Dorsolateral prefrontal cortex (tissue), 120 donors: ENCODE measurements at regions of chr1 and their contacts with region 1.

Region 1: GRCh38 chr1:109984456-109985275 is at the start of gene AHCYL1:
- DNase-seq: peak; percentile 99 to 100 (median 100)
- H3K4me3 ChIP-seq: peak within 1 kb of the TSS; percentile 67 to 98 (median 91)
- H3K27ac ChIP-seq: peak within 1 kb of the TSS; percentile 68 to 99 (median 96)
- H3K27me3 ChIP-seq: no peaks in the 10 kb centered on the region
- CTCF ChIP-seq: peak; percentile 95 to 100 (median 99)
- total RNA-seq, gene AHCYL1: 172 to 665 (median 292) TPM

Region 2: GRCh38 chr1:109548321-109549267 is 436.1 kb before region 1 on chr1 and contains the start of gene GNAI3:
- intact Hi-C with region 1: loop called (anchors 1 to 2 kb)
- DNase-seq: peak; percentile 96 to 99 (median 98)
- H3K4me3 ChIP-seq: peak within 1 kb of the TSS; percentile 70 to 99 (median 93)
- H3K27ac ChIP-seq: peak within 1 kb of the TSS; percentile 46 to 98 (median 90)
- H3K27me3 ChIP-seq: no peaks in the 10 kb centered on the region
- CTCF ChIP-seq: peak in 33 of 56 donors; percentile 7 to 65 (median 30)
- total RNA-seq, gene GNAI3: 3.6 to 7.2 (median 5.2) TPM

Region 3: GRCh38 chr1:109762821-109763645 is 221.6 kb before region 1 on chr1:
- intact Hi-C with region 1: no loop called
- DNase-seq: peak in 6 of 10 donors; percentile 5 to 32 (median 17)
- H3K4me3 ChIP-seq: no peak overlapping the region
- H3K27ac ChIP-seq: no peak overlapping the region
- H3K27me3 ChIP-seq: no peaks in the 10 kb centered on the region
- CTCF ChIP-seq: no peak

Region 4: DNA sequence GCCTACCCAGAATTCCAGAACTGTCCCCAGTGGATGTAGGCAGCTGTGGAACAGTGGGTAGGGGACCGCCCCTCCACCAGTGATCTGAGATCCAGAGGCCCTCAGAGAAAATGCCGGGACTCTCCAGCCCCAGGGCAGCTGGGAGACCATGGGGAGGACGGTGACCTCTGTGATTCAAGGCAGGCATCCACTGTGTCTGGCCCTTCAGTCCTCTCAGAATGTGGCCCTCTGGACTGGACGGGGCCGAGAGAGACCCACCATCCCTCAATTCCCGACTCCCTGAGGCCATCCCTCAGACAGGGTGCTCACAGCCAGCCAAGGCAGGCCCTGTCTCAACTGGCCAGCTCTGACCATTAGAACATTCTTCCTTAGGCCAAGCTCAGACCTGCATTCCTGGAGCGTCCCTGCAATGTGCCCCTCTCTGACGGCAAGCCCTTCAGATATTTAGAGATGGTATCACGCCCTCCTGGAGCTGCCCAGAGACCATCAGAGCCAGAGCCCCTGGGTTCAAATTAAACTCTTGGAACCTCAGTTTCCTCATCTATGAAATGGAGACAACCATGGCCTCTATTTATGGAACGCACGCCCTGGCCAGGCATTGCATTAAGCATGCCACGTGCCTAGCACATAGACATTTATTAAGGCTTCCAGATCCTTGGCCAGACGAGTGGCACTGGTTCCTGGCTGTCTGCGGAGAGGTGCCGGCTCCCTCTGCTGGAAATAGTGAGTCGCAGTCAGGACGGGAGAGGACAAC is 211.3 kb before region 1 on chr1:
- intact Hi-C with region 1: loop called (anchors 1 kb)
- DNase-seq: peak; percentile 58 to 88 (median 84)
- H3K4me3 ChIP-seq: no peak overlapping the region
- H3K27ac ChIP-seq: peak overlapping the region in 3 of 59 donors; percentile 18 to 49 (median 36)
- H3K27me3 ChIP-seq: no peaks in the 10 kb centered on the region
- CTCF ChIP-seq: peak; percentile 44 to 90 (median 83)

Region 5: DNA sequence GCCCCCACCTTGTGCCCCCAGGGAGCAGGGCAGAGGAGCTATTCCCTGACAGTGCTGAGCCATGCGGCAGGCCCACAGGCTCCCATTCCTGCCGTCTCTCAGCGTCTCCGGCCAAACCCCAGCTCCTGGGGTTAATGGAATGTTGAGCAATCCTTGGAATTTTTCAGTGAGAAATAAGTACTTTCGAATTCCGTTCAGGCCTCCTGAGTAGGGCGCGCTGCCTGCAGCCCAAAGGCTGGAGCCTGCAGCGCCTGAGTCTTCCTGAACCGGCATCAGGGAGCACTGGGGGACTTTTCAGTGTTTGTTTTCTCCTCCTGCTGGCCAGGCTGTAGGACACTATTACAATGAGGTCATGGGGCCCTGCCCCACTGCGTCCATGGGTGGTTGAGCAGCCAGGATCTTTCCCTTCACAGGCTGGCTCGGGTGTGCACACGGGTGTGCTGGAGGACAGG is 107.3 kb before region 1 on chr1:
- intact Hi-C with region 1: loop called (anchors 5 to 10 kb)
- DNase-seq: peak in 6 of 10 donors; percentile 40 to 73 (median 58)
- H3K4me3 ChIP-seq: peak overlapping the region in 22 of 59 donors; percentile 2 to 52 (median 17)
- H3K27ac ChIP-seq: peak overlapping the region; percentile 64 to 99 (median 89)
- H3K27me3 ChIP-seq: no peaks in the 10 kb centered on the region
- CTCF ChIP-seq: peak in 43 of 56 donors; percentile 7 to 61 (median 38)

Region 6: DNA sequence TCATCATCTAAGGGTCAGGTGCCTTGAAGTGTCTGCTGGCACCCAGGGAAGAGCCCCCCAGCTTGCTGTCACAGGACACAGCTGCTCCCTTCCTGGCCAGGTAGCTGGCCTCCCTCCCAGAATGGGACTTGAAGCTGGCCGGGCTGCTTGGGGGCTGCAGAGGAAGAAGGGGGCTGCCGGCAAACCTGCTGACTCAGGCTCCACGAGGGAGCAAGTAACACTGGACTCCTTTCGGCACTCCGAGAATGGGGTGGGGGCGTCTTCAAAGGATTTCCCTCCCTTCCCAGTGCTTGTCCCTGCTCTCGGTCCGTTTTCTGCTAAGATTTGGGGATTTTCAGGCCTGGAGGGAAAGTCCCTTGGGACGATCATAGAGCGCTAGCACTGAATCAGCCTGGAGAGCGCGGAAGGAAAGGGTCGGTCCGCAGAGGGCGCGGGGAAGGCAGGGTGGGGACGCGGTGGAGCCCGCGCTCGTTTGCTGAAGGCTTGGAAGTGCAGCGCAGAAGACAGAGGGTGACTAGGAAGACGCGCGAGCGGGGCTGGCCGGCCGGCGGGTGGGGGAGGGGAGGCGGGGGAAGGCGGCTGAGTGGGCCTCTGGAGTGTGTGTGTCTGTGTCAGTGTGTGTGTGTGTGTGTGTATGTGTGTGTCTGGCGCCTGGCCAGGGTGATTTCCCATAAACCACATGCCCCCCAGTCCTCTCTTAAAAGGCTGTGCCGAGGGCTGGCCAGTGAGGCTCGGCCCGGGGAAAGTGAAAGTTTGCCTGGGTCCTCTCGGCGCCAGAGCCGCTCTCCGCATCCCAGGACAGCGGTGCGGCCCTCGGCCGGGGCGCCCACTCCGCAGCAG is 74.3 kb before region 1 on chr1 and contains the start of gene CSF1:
- intact Hi-C with region 1: loop called (anchors 2 to 5 kb)
- DNase-seq: peak; percentile 38 to 86 (median 82)
- H3K4me3 ChIP-seq: peak within 1 kb of the TSS; percentile 53 to 91 (median 80)
- H3K27ac ChIP-seq: peak within 1 kb of the TSS in 57 of 59 donors; percentile 11 to 95 (median 86)
- H3K27me3 ChIP-seq: peaks cover 0 to 4% (median 0%) of the 10 kb centered on the region in 45 donors
- CTCF ChIP-seq: peak in 9 of 56 donors; percentile 5 to 34 (median 12)
- total RNA-seq, gene CSF1: 8.9 to 51.5 (median 20.8) TPM

Region 7: DNA sequence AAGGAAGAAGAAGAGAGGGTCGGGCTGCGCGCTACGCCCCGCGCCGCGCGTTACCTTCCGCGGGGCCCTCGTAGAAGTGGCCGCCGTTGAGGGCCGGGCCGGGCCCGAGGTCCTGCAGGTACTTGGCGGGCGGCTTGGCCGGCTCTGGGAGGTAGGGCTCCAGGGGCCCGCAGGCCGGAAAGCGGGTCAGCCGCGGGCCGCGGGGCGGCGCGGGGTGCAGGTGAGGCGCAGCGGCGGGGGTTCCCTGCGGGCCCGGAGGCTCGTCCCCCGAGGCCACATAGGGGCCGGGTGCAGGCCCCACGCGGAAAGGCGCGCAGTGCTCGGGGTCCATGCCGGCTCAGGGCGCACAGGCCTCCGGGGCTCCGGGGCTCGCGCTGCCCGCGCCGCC is 85.6 kb after region 1 on chr1:
- intact Hi-C with region 1: no loop called
- DNase-seq: no peak
- H3K4me3 ChIP-seq: peak overlapping the region in 45 of 59 donors; percentile 4 to 58 (median 33)
- H3K27ac ChIP-seq: peak overlapping the region in 23 of 59 donors; percentile 4 to 80 (median 59)
- H3K27me3 ChIP-seq: peaks cover 0 to 72% (median 58%) of the 10 kb centered on the region in 45 donors
- CTCF ChIP-seq: no peak